Gastrocnemius medialis (tissue), 4 donors: ENCODE measurements at regions of chr16 and their contacts with region 1.

Region 1: GRCh38 chr16:69186642-69187445 is at the start of gene SNTB2:
- DNase-seq: peak; percentile 79 to 89
- ATAC-seq: peak; percentile 94 to 95
- H3K4me3 ChIP-seq: peak within 1 kb of the TSS; percentile 67 to 92 (median 78)
- H3K27ac ChIP-seq: peak within 1 kb of the TSS; percentile 78 to 93 (median 90)
- H3K4me1 ChIP-seq: peaks cover 29 to 38% of the 10 kb centered on the region in 2 donors
- H3K27me3 ChIP-seq: no peaks in the 10 kb centered on the region
- CTCF ChIP-seq: no peak
- POLR2A ChIP-seq: peak; percentile 85 to 87
- total RNA-seq, gene SNTB2: 13.3 to 36.8 (median 33.0) TPM

Region 2: DNA sequence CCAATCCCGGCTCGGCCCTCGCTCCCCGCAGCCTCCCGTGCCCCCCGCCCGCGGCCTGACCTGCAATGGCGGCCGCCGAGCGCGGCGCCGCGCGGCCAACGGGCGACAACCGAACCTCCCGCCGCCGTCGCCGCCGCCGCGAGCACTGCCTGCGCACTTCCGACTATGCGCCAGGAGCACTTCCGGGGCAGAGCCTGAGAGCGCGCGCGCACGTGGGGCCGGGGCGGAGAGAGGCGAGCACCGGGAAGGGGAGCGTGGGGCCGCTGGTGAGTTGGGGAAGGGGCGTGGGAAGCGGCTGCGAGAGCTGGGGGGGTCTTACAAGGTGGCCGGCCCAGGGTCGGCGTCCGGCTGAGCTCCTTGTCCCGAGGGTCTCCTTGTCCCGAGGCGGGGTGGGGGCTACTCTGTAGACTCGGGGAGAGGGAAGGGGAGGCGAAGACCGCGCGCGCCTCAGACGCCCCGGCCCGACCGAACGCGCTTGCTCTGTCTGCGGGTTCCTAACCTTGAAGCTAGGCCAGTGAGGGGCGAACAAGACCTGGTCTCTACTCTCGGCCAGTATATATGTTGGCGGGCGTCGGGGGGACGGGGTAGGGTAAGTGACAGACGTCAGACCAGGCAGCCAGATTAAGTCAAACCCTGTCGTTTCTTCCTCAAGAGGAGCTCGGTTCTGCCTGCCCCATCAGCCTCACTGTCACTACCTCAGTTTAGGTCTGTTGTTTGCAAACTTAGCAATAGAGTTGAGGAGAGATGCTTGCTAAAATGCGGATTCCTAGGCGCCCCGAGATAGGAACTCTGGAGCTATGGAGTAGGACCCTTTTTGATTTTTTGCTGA is 54.2 kb before region 1 on chr16 and contains the starts of genes CHTF8 and UTP4:
- in situ Hi-C with region 1: no loop called
- intact Hi-C with region 1: loop called (anchors 1 kb)
- DNase-seq: peak; percentile 72 to 82
- ATAC-seq: peak; percentile 95 to 97
- H3K4me3 ChIP-seq: peak within 1 kb of the TSS; percentile 79 to 97 (median 86)
- H3K27ac ChIP-seq: peak within 1 kb of the TSS; percentile 86 to 94 (median 92)
- H3K4me1 ChIP-seq: peaks cover 26 to 29% of the 10 kb centered on the region in 2 donors
- H3K27me3 ChIP-seq: no peaks in the 10 kb centered on the region
- CTCF ChIP-seq: no peak
- POLR2A ChIP-seq: peak; percentile 97 to 98
- total RNA-seq, gene CHTF8: 27.3 to 52.3 (median 34.8) TPM
- total RNA-seq, gene UTP4: 33.1 to 44.2 (median 35.5) TPM

Region 3: DNA sequence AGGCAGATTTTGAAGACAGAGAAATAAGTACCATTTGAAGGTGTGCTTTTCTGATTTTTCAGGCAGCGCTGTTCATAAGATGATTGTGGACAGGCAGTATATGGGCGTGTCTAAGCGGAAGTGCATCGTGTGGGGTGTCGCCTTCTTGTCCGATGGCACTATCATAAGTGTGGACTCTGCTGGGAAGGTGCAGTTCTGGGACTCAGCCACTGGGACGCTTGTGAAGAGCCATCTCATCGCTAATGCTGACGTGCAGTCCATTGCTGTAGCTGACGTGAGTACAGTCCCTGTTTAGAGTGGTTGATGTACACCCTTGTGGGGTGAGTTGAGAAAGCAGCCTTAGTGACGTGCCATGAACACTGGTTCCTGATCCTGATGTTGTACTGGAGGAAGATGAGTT is 43.7 kb before region 1 on chr16:
- in situ Hi-C with region 1: no loop called
- intact Hi-C with region 1: no loop called
- DNase-seq: no peak
- ATAC-seq: no peak
- H3K4me3 ChIP-seq: no peak overlapping the region
- H3K27ac ChIP-seq: no peak overlapping the region
- H3K4me1 ChIP-seq: peaks cover 0 to 9% of the 10 kb centered on the region in 2 donors
- H3K27me3 ChIP-seq: no peaks in the 10 kb centered on the region
- CTCF ChIP-seq: no peak
- POLR2A ChIP-seq: no peak

Region 4: DNA sequence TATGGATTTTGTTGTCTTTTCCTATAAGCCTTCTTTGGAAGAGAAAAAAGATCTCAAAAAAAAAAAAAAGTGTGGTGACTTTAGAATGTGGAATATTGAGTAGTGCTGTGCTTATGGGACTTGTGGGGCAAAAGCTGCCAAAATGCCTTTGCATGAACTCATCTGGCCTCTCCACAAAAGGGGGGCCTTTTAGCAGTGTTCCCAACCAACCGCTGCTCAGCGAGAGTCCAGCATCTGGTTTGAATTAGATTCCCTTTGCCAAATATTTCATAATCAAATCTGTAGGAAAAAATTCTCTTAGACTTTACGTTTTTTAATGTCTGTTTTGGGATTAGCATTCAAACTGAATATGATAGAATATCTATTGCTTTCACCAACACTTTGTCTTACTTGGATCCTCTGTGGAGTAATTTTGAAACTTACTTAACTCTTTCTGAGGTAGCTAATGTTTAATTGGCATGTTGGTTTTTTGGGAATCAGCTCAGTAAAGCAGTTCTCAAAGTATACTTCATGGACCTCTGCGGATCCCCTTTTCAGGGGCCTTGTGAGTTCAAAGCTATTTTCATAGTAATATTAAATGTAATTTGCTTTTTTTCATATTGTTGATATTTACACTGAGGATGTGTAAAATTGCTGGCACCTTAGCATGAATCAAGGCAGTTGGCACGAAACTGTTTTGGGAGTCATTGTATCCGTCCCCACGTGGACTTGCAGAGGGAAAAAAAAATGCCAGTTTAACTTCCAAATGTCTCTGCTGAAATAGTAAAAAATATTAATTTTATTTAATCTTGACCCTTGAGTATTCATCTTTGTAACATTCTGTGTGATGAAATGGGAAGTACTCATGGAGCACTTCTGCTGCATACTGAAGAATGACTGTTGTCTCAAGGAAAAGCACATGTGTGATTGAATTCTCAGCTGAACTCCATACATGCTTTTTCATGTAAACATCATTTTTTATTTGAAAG is 89.6 kb after region 1 on chr16:
- in situ Hi-C with region 1: no loop called
- intact Hi-C with region 1: no loop called
- DNase-seq: peak; percentile 49 to 72
- ATAC-seq: peak; percentile 83 to 91
- H3K4me3 ChIP-seq: no peak overlapping the region
- H3K27ac ChIP-seq: peak overlapping the region; percentile 23 to 60 (median 38)
- H3K4me1 ChIP-seq: peaks cover 10 to 30% of the 10 kb centered on the region in 2 donors
- H3K27me3 ChIP-seq: no peaks in the 10 kb centered on the region
- CTCF ChIP-seq: no peak
- POLR2A ChIP-seq: no peak

Region 5: GRCh38 chr16:69286941-69287713 is 100.3 kb after region 1 on chr16:
- in situ Hi-C with region 1: no loop called
- intact Hi-C with region 1: loop called (anchors 2 kb)
- DNase-seq: peak; percentile 76 to 93
- ATAC-seq: peak; percentile 97 to 98
- H3K4me3 ChIP-seq: no peak overlapping the region
- H3K27ac ChIP-seq: peak overlapping the region; percentile 48 to 80 (median 70)
- H3K4me1 ChIP-seq: peaks cover 7 to 9% of the 10 kb centered on the region in 2 donors
- H3K27me3 ChIP-seq: no peaks in the 10 kb centered on the region
- CTCF ChIP-seq: peak; percentile 46 to 77 (median 69)
- POLR2A ChIP-seq: no peak

Region 6: GRCh38 chr16:69310653-69311532 is 124.0 kb after region 1 on chr16 and contains the start of gene VPS4A:
- in situ Hi-C with region 1: no loop called
- intact Hi-C with region 1: loop called (anchors 1 kb)
- DNase-seq: peak; percentile 93 to 95
- ATAC-seq: peak; percentile 91 to 96
- H3K4me3 ChIP-seq: peak within 1 kb of the TSS; percentile 74 to 97 (median 76)
- H3K27ac ChIP-seq: peak within 1 kb of the TSS; percentile 81 to 95 (median 90)
- H3K4me1 ChIP-seq: peaks cover 15 to 19% of the 10 kb centered on the region in 2 donors
- H3K27me3 ChIP-seq: no peaks in the 10 kb centered on the region
- CTCF ChIP-seq: peak; percentile 90 to 99 (median 94)
- POLR2A ChIP-seq: peak; percentile 62 to 87
- total RNA-seq, gene VPS4A: 53.3 to 112 (median 70.1) TPM

Region 7: GRCh38 chr16:69386596-69386995 is 199.8 kb after region 1 on chr16:
- in situ Hi-C with region 1: no loop called
- intact Hi-C with region 1: loop called (anchors 5 kb)
- DNase-seq: no peak
- ATAC-seq: no peak
- H3K4me3 ChIP-seq: peak overlapping the region in 1 of 4 donors; percentile 82
- H3K27ac ChIP-seq: peak overlapping the region; percentile 84 to 95 (median 86)
- H3K4me1 ChIP-seq: peaks cover 8 to 12% of the 10 kb centered on the region in 2 donors
- H3K27me3 ChIP-seq: no peaks in the 10 kb centered on the region
- CTCF ChIP-seq: no peak
- POLR2A ChIP-seq: no peak